ENCODE measurements at regions of chr9 and their contacts with region 1.

Region 1: DNA sequence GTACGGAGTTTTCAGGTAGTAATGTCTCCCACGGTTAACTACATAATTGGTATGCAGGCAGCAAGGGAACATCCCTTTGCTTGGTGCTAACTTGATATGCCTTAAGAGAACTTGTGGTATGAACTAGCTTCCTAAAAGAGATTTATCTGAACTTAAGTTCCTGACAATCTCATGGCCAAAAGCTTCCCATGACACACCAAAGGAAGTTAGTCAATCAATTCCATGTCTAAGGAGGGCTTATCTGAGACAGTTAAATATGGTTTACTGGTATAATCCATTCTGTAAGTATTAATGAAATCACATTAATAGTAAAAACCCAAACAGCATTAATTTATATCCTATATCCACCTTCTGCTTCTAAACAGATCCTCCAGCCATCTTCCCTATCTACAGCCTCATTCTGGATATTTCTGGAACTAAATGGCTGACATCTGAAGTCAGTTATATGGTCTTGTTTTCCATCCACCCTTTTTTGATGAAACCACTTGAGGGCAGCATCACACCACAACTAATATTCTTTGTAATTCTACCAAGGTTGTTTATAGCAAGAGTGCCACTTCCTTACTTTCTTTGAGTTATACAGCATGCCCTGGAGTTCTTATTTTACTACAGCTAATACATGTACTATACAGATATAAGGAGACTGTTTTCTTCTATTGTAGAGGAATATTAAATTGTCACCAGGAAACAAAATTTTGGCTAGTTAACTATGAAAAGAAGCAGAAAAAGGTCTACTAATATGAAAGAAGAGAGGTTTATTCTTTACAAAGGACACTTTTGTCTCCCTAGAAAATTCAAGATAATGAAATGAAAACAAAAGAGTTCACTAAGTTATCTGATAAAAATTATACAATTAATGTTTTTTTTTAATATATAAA is 34.7 kb downstream of the SHOC1 start:
- DNase-seq: peak; percentile 79
- ATAC-seq: peak; percentile 97
- H3K4me3 ChIP-seq: no peak overlapping the region
- H3K27ac ChIP-seq: no peak overlapping the region
- H3K4me1 ChIP-seq: no peaks in the 10 kb centered on the region
- H3K27me3 ChIP-seq: no peaks in the 10 kb centered on the region
- CTCF ChIP-seq: peak; percentile 51 to 73 (median 56); a peak in 4 of 6 replicates
- EP300 ChIP-seq: no peak
- POLR2A ChIP-seq: no peak
- RAD21 ChIP-seq: peak; percentile 95

Region 2: DNA sequence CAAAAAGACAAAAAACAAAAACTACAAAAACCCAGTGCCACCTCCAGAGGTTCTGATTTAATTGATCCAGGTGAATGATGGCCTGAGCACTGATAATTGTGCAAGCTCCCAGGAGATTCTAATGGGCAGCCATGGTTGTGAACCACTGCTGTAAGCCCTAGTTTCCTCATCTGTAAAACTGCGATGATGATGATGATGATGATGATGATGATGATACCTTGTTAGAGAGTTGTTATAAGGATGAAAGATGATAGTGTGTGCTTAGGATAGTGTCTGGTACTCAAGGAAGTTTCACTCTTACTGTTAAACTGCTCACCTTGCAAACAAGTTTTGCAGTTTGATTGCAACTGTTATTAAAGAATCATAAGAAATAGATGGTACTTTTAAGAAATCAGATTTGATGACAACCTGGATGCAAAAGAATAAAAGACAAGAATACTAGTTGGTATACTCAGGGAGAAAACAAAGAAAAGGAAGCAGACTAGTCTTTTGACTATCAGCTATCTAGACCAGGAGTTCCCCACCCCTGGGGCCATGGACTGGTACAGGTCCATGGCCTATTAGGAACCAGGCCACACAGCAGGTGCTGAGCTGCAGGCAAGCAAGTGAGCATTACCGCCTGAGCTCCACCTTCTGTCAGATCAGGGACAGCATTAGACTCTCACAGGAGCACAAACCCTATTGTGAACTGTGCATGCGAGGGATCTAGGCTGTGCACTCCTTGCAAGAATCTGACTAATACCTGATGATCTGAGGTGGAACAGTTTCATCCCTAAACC is 528.0 kb before region 1 on chr9:
- CTCF ChIA-PET with region 1: no interaction called
- POLR2A ChIA-PET with region 1: no interaction called
- RAD21 ChIA-PET with region 1: no interaction called
- SMC1A ChIA-PET with region 1: no interaction called
- in situ Hi-C with region 1: no loop called
- intact Hi-C with region 1: no loop called
- DNase-seq: no peak
- ATAC-seq: peak; percentile 73
- H3K4me3 ChIP-seq: no peak overlapping the region
- H3K27ac ChIP-seq: no peak overlapping the region
- H3K4me1 ChIP-seq: no peaks in the 10 kb centered on the region
- H3K27me3 ChIP-seq: no peaks in the 10 kb centered on the region
- CTCF ChIP-seq: no peak
- EP300 ChIP-seq: no peak
- POLR2A ChIP-seq: no peak
- RAD21 ChIP-seq: no peak

Region 3: GRCh38 chr9:111975709-111976108 is 215.7 kb after region 1 on chr9:
- CTCF ChIA-PET with region 1: interaction called, 4 read pairs
- POLR2A ChIA-PET with region 1: no interaction called
- RAD21 ChIA-PET with region 1: interaction called, 4 read pairs
- SMC1A ChIA-PET with region 1: interaction called, 11 read pairs
- in situ Hi-C with region 1: no loop called
- intact Hi-C with region 1: loop called (anchors 10 kb)
- DNase-seq: peak; percentile 39
- ATAC-seq: peak; percentile 79
- H3K4me3 ChIP-seq: no peak overlapping the region
- H3K27ac ChIP-seq: no peak overlapping the region
- H3K4me1 ChIP-seq: peaks cover 12% of the 10 kb centered on the region
- H3K27me3 ChIP-seq: no peaks in the 10 kb centered on the region
- CTCF ChIP-seq: peak; percentile 4 to 51 (median 14); a peak in 2 of 6 replicates
- EP300 ChIP-seq: no peak
- POLR2A ChIP-seq: no peak
- RAD21 ChIP-seq: peak; percentile 57

Region 4: GRCh38 chr9:112050544-112051475 is 290.8 kb after region 1 on chr9:
- CTCF ChIA-PET with region 1: interaction called, 5 read pairs
- POLR2A ChIA-PET with region 1: no interaction called
- RAD21 ChIA-PET with region 1: no interaction called
- SMC1A ChIA-PET with region 1: interaction called, 13 read pairs
- in situ Hi-C with region 1: no loop called
- intact Hi-C with region 1: no loop called
- DNase-seq: no peak
- ATAC-seq: no peak
- H3K4me3 ChIP-seq: no peak overlapping the region
- H3K27ac ChIP-seq: no peak overlapping the region
- H3K4me1 ChIP-seq: peaks cover 31% of the 10 kb centered on the region
- H3K27me3 ChIP-seq: no peaks in the 10 kb centered on the region
- CTCF ChIP-seq: no peak
- EP300 ChIP-seq: no peak
- POLR2A ChIP-seq: no peak
- RAD21 ChIP-seq: no peak

Region 5: DNA sequence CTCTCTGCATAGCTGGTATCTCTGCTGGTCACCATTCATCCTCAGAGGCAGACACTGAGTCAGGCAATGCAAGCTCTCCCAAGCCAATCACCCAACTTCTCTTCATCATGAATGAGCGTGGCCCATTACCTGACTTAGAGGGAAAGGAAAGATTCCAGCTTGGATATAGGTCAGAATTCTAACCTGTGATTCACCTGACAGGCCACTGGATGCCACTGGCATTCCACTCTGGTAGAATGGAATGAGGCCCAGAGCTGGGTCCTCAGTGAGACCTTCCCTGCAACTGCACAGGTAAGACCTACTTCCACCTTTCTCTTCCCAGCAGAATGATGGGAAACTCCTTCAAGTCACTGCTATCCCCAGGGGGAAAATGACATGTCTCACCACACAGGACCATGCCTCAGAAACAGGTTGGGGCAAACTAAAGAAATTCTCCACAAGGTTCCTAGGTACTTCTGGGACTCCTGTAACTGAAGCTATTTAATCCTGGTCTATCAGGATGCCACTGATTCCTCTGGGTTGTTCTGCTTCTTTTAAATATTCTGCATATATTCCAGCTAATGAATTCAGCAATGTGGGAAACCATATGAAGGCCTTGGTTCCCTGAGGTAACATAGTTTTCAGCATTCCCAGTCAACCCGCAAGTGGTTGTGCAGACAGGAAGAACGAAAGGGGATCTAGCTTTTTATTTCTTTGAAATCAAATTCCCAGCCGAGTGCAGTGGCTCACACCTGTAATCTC is 353.1 kb after region 1 on chr9:
- CTCF ChIA-PET with region 1: interaction called, 16 read pairs
- POLR2A ChIA-PET with region 1: no interaction called
- RAD21 ChIA-PET with region 1: interaction called, 3 read pairs
- SMC1A ChIA-PET with region 1: interaction called, 6 read pairs
- in situ Hi-C with region 1: no loop called
- intact Hi-C with region 1: no loop called
- DNase-seq: no peak
- ATAC-seq: peak; percentile 75
- H3K4me3 ChIP-seq: no peak overlapping the region
- H3K27ac ChIP-seq: no peak overlapping the region
- H3K4me1 ChIP-seq: no peaks in the 10 kb centered on the region
- H3K27me3 ChIP-seq: no peaks in the 10 kb centered on the region
- CTCF ChIP-seq: peak; percentile 56 to 74 (median 57); a peak in 5 of 6 replicates
- EP300 ChIP-seq: no peak
- POLR2A ChIP-seq: no peak
- RAD21 ChIP-seq: peak; percentile 88

Region 6: GRCh38 chr9:112819635-112820496 is 1059.9 kb after region 1 on chr9:
- CTCF ChIA-PET with region 1: interaction called, 5 read pairs
- POLR2A ChIA-PET with region 1: no interaction called
- RAD21 ChIA-PET with region 1: no interaction called
- SMC1A ChIA-PET with region 1: interaction called, 3 read pairs
- in situ Hi-C with region 1: no loop called
- intact Hi-C with region 1: loop called (anchors 10 kb)
- DNase-seq: peak; percentile 26
- ATAC-seq: peak; percentile 96
- H3K4me3 ChIP-seq: no peak overlapping the region
- H3K27ac ChIP-seq: no peak overlapping the region
- H3K4me1 ChIP-seq: peaks cover 13% of the 10 kb centered on the region
- H3K27me3 ChIP-seq: no peaks in the 10 kb centered on the region; a peak in 2 of 4 replicates
- CTCF ChIP-seq: peak; percentile 69 to 76 (median 76)
- EP300 ChIP-seq: no peak
- POLR2A ChIP-seq: no peak
- RAD21 ChIP-seq: peak; percentile 85

Measured in GM12878 (cell line).